CD4-positive, alpha-beta T cell (primary cell): ENCODE measurements at regions of chr15 and their contacts with region 1.

Region 1: DNA sequence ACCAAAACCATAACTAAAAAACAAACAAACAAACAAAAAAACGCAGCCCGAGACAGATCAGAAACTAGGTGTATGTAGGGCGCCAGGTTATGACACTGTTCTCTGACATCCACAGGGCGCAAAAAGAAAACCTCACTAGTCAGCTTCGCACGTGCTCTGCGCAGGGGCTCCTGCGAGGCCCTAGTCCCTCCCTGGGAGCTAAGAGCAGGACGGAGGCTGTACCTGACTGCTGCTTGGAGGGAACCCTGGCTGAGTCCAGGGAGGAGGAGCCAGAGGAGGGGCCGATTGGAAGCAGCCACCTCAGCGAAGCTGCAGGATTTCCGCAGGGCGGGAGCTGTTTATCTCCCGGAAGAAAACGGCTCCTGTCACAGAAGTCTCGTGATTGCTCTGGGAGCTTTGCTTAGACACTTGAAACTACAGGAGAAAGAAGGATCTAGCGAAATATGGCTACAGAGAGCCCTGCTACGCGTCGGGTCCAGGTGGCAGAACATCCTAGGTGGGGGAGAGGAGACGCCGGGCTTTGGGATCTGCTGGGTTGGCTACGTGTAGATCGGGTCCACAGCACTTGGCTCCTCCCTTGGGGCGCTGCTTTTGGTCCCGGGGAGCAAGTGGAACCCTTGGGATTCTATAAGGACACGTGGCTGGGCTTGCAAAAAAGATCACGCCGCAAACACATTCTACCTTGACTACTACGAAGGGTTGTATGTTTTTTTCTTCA is at the start of gene GALK2:
- DNase-seq: peak; percentile 48 to 94 (median 73)
- ATAC-seq: peak; percentile 98
- H3K4me3 ChIP-seq: peak within 1 kb of the TSS; percentile 76
- H3K4me3 Mint-ChIP-seq: peak within 1 kb of the TSS; percentile 92
- H3K27ac ChIP-seq: peak within 1 kb of the TSS; percentile 77 to 88
- H3K27ac Mint-ChIP-seq: peak within 1 kb of the TSS; percentile 93
- H3K4me1 ChIP-seq: peaks cover 18% of the 10 kb centered on the region
- H3K4me1 Mint-ChIP-seq: peaks cover 52% of the 10 kb centered on the region
- H3K27me3 ChIP-seq: no peaks in the 10 kb centered on the region
- H3K27me3 Mint-ChIP-seq: no peaks in the 10 kb centered on the region
- CTCF ChIP-seq: no peak
- total RNA-seq, gene GALK2: 11.5 to 11.9 TPM

Region 2: DNA sequence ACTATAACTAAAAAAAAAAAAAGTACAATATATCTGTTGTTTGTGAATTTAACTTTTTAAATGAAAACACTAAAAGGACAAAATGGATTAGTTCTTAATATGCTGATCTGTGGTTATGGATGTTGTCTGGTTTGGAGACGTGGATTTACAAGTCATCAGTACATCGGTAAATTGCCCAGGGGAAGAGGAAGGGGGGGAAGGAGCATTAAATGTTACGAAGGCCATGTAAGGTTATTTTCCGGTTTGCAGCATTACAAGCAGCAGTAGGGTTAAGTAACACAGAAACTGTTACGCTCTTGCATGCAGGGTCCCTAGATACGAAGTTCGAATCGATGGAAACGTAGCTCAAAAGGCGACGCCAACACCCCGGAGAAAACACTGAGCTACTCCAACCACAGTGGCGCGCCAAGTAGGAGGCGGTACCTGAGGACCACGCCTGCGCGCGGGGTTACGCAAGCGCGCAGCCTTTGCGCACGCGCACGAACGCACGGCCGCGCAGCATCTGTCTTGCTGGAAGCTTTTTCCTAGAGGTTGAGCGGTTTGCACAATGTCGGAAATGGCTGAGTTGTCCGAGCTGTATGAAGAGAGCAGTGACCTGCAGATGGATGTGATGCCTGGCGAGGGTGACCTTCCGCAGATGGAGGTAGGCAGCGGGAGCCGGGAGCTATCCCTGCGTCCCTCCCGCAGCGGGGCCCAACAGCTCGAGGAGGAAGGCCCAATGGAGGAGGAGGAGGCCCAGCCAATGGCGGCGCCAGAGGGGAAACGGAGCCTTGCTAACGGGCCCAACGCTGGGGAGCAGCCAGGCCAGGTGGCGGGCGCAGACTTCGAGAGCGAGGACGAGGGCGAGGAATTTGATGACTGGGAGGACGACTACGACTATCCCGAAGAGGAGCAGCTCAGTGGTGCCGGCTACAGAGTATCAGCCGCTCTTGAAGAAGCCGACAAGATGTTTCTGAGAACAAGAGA is 292.1 kb before region 1 on chr15 and contains the start of gene EID1:
- CTCF ChIA-PET with region 1: no interaction called
- POLR2A ChIA-PET with region 1: interaction called, 15 read pairs
- intact Hi-C with region 1: no loop called
- DNase-seq: peak; percentile 84 to 98 (median 90)
- ATAC-seq: peak; percentile 93
- H3K4me3 ChIP-seq: peak within 1 kb of the TSS; percentile 92
- H3K4me3 Mint-ChIP-seq: peak within 1 kb of the TSS; percentile 94
- H3K27ac ChIP-seq: peak within 1 kb of the TSS; percentile 68 to 78
- H3K27ac Mint-ChIP-seq: peak within 1 kb of the TSS; percentile 95
- H3K4me1 ChIP-seq: peaks cover 7% of the 10 kb centered on the region
- H3K4me1 Mint-ChIP-seq: peaks cover 23% of the 10 kb centered on the region
- H3K27me3 ChIP-seq: no peaks in the 10 kb centered on the region
- H3K27me3 Mint-ChIP-seq: peaks cover 25% of the 10 kb centered on the region
- CTCF ChIP-seq: no peak
- total RNA-seq, gene EID1: 41.0 to 45.3 TPM

Region 3: DNA sequence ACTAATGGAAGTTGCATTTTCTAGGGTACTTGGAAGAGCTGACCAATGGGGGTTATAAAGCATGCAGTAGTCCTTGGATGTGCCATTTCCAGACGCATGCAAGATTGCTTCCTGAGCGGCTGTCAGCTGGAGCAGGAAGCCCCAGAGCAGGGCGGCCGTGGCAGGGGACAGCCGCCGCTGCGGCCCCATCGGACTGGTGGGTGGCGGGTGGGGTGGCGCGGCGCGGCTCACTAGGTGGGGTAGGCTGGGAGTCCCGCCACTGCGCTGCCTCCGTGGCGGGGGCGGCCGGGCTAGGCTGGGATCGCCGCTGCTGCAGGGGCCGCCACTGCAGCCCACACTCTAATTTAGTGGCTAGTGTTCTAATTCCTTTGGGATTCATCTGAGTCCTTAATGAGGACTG is 196.5 kb after region 1 on chr15:
- CTCF ChIA-PET with region 1: no interaction called
- POLR2A ChIA-PET with region 1: no interaction called
- intact Hi-C with region 1: no loop called
- DNase-seq: no peak
- ATAC-seq: no peak
- H3K4me3 ChIP-seq: no peak overlapping the region
- H3K4me3 Mint-ChIP-seq: no peak overlapping the region
- H3K27ac ChIP-seq: no peak overlapping the region
- H3K27ac Mint-ChIP-seq: no peak overlapping the region
- H3K4me1 ChIP-seq: no peaks in the 10 kb centered on the region
- H3K4me1 Mint-ChIP-seq: no peaks in the 10 kb centered on the region
- H3K27me3 ChIP-seq: no peaks in the 10 kb centered on the region
- H3K27me3 Mint-ChIP-seq: no peaks in the 10 kb centered on the region
- CTCF ChIP-seq: no peak